CD8-positive, alpha-beta T cell (primary cell): ENCODE measurements at regions of chr5 and their contacts with region 1.

Region 1: GRCh38 chr5:173887610-173888472 is at the start of gene CPEB4:
- DNase-seq: peak; percentile 92 to 100 (median 96)
- ATAC-seq: peak; percentile 95
- H3K4me3 ChIP-seq: peak within 1 kb of the TSS; percentile 68 to 76
- H3K4me3 Mint-ChIP-seq: peak within 1 kb of the TSS; percentile 100
- H3K27ac ChIP-seq: peak within 1 kb of the TSS; percentile 42 to 97
- H3K27ac Mint-ChIP-seq: peak within 1 kb of the TSS; percentile 99
- H3K4me1 ChIP-seq: peaks cover 48% of the 10 kb centered on the region
- H3K4me1 Mint-ChIP-seq: peaks cover 78% of the 10 kb centered on the region
- H3K27me3 ChIP-seq: no peaks in the 10 kb centered on the region
- H3K27me3 Mint-ChIP-seq: no peaks in the 10 kb centered on the region
- CTCF ChIP-seq: no peak
- total RNA-seq, gene CPEB4: 21.7 to 24.3 TPM

Region 2: GRCh38 chr5:172833686-172834414 is 1054.0 kb before region 1 on chr5 and contains the start of gene ERGIC1:
- CTCF ChIA-PET with region 1: no interaction called
- POLR2A ChIA-PET with region 1: no interaction called
- intact Hi-C with region 1: loop called in 1 of 2 experiments (anchors 10 kb)
- DNase-seq: peak in 8 of 9 experiments; percentile 58 to 84 (median 72)
- ATAC-seq: peak; percentile 74
- H3K4me3 ChIP-seq: peak within 1 kb of the TSS; percentile 67 to 81
- H3K4me3 Mint-ChIP-seq: peak within 1 kb of the TSS; percentile 86
- H3K27ac ChIP-seq: peak within 1 kb of the TSS; percentile 67 to 88
- H3K27ac Mint-ChIP-seq: peak within 1 kb of the TSS; percentile 92
- H3K4me1 ChIP-seq: peaks cover 44% of the 10 kb centered on the region
- H3K4me1 Mint-ChIP-seq: peaks cover 44% of the 10 kb centered on the region
- H3K27me3 ChIP-seq: no peaks in the 10 kb centered on the region
- H3K27me3 Mint-ChIP-seq: no peaks in the 10 kb centered on the region
- CTCF ChIP-seq: no peak
- total RNA-seq, gene ERGIC1: 61.0 to 61.2 TPM

Region 3: DNA sequence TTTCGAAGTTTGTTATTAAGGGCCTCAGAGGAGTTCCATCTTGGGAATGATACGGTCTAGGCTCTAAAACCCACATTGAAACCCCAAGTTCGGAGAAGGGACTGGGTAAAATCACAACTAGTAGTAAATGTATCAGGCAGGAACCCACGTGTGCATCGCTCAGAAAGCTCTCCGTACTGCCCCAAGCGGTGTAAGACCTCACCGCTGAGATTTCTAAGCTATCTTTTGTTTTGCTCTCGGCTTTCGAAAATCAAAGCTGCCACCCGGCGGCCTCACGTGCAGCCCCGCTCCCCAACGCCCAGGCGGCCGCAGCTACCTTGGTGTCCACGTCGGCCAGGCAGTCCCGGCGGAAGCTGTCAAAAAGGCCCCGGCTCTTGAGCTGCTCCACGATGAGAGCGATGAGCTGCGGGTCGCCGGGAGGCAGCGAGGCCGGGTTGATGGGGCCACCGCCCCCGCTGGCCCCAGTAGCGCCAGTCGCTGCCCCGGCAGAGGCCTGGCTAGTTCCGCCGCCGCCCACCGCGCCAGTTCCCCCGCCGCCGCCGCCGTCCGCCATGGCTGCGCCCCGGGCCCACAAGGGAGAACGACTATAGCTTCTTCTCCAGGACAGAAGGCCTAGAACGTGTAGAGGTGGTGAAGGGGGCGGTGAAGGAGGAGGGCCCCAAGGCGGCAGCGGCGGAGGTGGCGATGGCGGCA is 271.8 kb before region 1 on chr5:
- CTCF ChIA-PET with region 1: interaction called, 7 read pairs
- POLR2A ChIA-PET with region 1: interaction called, 25 read pairs
- intact Hi-C with region 1: loop called (anchors 1 kb)
- DNase-seq: peak; percentile 41 to 88 (median 70)
- ATAC-seq: peak; percentile 60
- H3K4me3 ChIP-seq: peak overlapping the region; percentile 81 to 89
- H3K4me3 Mint-ChIP-seq: peak overlapping the region; percentile 95
- H3K27ac ChIP-seq: peak overlapping the region; percentile 85 to 91
- H3K27ac Mint-ChIP-seq: peak overlapping the region; percentile 97
- H3K4me1 ChIP-seq: peaks cover 34% of the 10 kb centered on the region
- H3K4me1 Mint-ChIP-seq: peaks cover 52% of the 10 kb centered on the region
- H3K27me3 ChIP-seq: no peaks in the 10 kb centered on the region
- H3K27me3 Mint-ChIP-seq: no peaks in the 10 kb centered on the region
- CTCF ChIP-seq: peak; percentile 73

Region 4: DNA sequence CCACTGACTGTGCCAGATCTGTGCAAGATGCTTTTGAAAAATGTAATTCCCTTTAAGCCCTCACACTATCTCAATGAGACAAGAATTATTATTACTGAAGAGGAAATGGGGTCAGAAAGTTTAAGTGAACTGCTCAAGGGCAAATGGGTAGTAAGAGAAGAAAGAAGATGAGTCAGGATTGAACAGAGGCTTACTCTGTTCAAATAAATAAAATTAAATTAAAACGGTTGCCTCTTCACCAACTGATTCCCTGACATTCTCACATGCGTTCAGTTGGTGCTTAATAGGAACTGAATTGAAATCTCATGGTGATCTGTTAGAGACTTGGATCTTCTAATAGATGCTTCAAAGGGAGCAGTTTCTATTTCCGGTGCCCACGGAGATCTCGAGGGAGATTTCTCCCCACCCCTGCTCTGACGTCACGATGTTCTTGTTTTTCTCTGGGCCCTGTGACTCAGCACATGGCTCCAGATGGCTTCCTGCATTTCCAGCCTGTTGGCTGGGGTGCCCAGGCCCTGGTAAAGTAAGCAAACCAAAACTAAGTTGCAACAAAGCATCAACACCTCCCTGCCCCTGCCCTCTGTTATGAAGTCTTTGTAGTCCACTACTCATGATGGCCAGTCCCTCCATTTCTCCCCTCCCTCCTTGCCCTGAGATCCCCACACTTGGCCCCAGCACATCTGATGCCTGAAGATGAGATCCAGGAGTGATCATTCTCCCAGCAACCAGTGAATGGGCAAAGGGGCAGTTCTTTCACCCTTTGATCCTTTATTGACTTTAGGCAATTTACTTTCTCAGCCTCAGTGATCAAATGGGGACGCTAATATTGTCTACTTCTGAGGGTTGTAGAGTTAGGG is 105.8 kb before region 1 on chr5:
- CTCF ChIA-PET with region 1: no interaction called
- POLR2A ChIA-PET with region 1: no interaction called
- intact Hi-C with region 1: loop called in 1 of 2 experiments (anchors 1 kb)
- DNase-seq: peak; percentile 16 to 76 (median 69)
- ATAC-seq: peak; percentile 93
- H3K4me3 ChIP-seq: no peak overlapping the region
- H3K4me3 Mint-ChIP-seq: no peak overlapping the region
- H3K27ac ChIP-seq: no peak overlapping the region
- H3K27ac Mint-ChIP-seq: peak overlapping the region; percentile 86
- H3K4me1 ChIP-seq: peaks cover 6% of the 10 kb centered on the region
- H3K4me1 Mint-ChIP-seq: peaks cover 15% of the 10 kb centered on the region
- H3K27me3 ChIP-seq: no peaks in the 10 kb centered on the region
- H3K27me3 Mint-ChIP-seq: no peaks in the 10 kb centered on the region
- CTCF ChIP-seq: no peak

Region 5: DNA sequence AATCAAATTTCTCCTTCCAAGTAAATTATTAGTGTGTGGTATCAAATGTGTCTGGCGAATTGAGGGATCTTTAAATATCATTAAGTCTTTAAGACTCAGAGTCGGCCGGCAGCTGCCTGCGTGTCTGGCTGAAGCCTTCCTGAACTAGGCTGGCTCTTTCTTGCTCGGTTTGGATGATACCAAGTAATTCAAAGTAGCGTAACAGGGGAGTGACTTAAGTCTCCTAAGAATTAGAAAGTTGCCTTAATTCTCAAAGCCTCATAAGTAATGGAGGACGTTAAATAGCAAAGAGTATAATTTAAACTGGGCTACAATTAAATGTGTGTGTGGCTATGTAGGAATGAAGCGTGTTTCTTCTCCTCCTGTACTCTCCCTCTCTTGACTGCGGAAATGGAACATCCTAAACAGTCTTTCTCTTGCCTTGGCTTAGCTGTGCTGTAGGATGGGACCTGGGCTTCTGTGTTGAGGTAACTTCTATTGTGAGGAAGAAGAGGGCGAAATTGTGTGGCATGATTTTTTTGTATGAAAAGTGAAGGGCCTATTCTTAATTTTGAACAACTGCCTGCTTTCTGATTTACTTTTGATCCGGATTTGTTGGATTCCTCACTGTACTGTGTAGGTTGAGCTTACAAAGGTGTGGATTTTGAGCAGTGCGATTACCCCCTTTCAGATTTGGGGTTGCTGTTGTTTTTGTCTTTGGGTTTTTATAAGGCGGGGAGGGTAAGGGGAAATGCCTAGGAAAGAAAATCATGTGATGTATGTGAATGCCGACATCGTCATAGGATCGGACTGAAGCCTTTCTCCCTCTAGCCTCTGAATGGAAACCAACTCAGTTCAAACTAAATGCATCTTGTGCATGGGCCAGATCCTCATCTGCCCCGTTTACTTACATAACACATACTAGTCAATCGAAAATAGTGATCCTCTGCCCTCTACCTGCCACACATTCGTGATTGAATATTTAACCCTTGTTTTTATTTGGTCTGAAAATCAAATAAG is 30.2 kb after region 1 on chr5:
- CTCF ChIA-PET with region 1: interaction called, 8 read pairs
- POLR2A ChIA-PET with region 1: interaction called, 76 read pairs
- intact Hi-C with region 1: loop called (anchors 1 kb)
- DNase-seq: peak; percentile 18 to 89 (median 59)
- ATAC-seq: peak; percentile 92
- H3K4me3 ChIP-seq: peak overlapping the region; percentile 58 to 63
- H3K4me3 Mint-ChIP-seq: no peak overlapping the region
- H3K27ac ChIP-seq: peak overlapping the region; percentile 68 to 84
- H3K27ac Mint-ChIP-seq: no peak overlapping the region
- H3K4me1 ChIP-seq: peaks cover 13% of the 10 kb centered on the region
- H3K4me1 Mint-ChIP-seq: peaks cover 23% of the 10 kb centered on the region
- H3K27me3 ChIP-seq: no peaks in the 10 kb centered on the region
- H3K27me3 Mint-ChIP-seq: no peaks in the 10 kb centered on the region
- CTCF ChIP-seq: no peak

Region 6: GRCh38 chr5:174119468-174119881 is 231.6 kb after region 1 on chr5:
- CTCF ChIA-PET with region 1: no interaction called
- POLR2A ChIA-PET with region 1: no interaction called
- intact Hi-C with region 1: no loop called
- DNase-seq: no peak
- ATAC-seq: no peak
- H3K4me3 ChIP-seq: no peak overlapping the region
- H3K4me3 Mint-ChIP-seq: no peak overlapping the region
- H3K27ac ChIP-seq: no peak overlapping the region
- H3K27ac Mint-ChIP-seq: no peak overlapping the region
- H3K4me1 ChIP-seq: no peaks in the 10 kb centered on the region
- H3K4me1 Mint-ChIP-seq: no peaks in the 10 kb centered on the region
- H3K27me3 ChIP-seq: no peaks in the 10 kb centered on the region
- H3K27me3 Mint-ChIP-seq: peaks cover 3% of the 10 kb centered on the region
- CTCF ChIP-seq: no peak

Region 7: GRCh38 chr5:174283211-174284005 is 395.6 kb after region 1 on chr5:
- CTCF ChIA-PET with region 1: no interaction called
- POLR2A ChIA-PET with region 1: no interaction called
- intact Hi-C with region 1: no loop called
- DNase-seq: no peak
- ATAC-seq: no peak
- H3K4me3 ChIP-seq: no peak overlapping the region
- H3K4me3 Mint-ChIP-seq: no peak overlapping the region
- H3K27ac ChIP-seq: no peak overlapping the region
- H3K27ac Mint-ChIP-seq: no peak overlapping the region
- H3K4me1 ChIP-seq: no peaks in the 10 kb centered on the region
- H3K4me1 Mint-ChIP-seq: no peaks in the 10 kb centered on the region
- H3K27me3 ChIP-seq: no peaks in the 10 kb centered on the region
- H3K27me3 Mint-ChIP-seq: peaks cover 10% of the 10 kb centered on the region
- CTCF ChIP-seq: no peak